Posterior vena cava (tissue), 2 donors: ENCODE measurements at regions of chr1 and their contacts with region 1.

Region 1: GRCh38 chr1:96191165-96191564 is 530.4 kb upstream of the PTBP2 start:
- DNase-seq: no peak

Region 2: DNA sequence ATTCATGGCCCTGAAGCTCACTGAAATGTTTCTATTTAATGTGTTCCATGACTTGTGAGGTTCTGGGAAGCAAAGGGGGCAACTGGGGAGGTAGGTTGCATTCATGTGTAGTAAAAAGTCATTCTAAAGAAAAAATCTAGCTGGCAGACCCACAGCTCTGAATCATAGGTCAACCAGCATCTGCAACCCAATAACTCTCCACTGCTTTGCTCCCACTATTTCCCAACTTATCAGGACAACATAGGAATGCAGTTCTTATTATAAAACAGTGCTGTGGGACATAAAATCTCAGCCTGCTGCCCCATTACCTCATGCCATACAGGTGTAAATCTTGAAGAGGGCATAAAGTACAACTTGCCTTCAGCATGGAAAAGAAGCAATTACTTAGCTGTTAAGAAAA is 45.7 kb before region 1 on chr1:
- intact Hi-C with region 1: loop called in 1 of 2 experiments (anchors 2 kb)
- DNase-seq: no peak

Region 3: DNA sequence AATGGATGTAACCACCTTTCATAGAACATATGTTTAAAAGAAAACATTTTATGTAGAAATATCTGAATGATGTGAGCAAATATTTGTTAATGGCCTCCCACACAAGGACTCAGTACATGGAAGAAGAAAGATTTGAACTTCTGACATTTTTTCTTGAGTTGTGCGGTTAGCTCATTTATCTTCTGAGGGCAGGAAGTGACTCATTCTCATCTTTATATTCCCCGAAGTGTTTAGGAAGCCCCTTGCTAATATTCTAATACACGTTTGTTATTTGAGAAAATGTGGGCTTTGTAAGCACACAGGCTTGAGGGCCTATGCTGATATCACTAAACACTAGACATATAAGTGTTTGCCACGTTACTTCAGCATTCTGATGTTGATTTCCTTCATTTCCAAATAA is 138.0 kb after region 1 on chr1:
- intact Hi-C with region 1: no loop called
- DNase-seq: no peak